ENCODE measurements at regions of chr10 and their contacts with region 1.

Region 1: DNA sequence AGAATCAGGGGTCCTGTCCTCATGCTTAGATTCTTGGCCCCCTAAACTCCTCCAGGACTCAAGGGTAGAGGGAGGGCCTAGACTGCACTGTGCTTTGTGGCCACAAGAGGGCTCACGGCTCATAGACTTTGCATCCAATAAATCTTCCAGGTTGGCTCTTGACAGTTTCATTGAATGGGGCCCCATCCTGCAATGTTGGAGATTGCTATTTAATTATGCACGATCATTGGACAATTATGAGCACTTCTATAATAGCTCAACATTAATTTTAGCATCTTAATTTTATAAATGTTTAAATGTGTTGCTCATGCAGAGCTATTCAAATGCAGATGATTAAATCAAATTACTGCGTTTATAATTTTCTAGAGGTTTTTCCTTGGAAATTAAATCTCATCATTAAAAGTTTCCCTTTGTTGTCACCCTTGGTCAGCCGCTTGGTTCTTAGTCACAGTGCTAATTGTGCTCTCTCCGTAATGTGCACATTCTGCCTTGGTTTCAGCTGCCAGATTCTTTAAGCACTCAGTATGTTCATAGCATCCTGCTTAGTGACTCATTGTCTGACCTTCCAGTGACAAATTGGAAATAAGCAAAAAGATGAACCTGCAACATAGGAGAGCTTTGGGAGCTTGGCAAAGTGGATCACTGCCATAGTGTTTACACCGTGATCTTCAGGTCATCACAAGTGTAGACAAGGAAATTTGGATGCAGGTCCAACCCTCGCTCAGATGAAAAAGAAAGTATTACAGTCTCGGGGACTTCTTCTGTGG is 33.4 kb upstream of the PLPP4 start:
- H3K4me3 ChIP-seq: no peak overlapping the region
- H3K27ac ChIP-seq: no peak overlapping the region
- H3K4me1 ChIP-seq: no peaks in the 10 kb centered on the region
- CTCF ChIP-seq: peak; percentile 32; the same call in 1 of the 2 replicates

Region 2: DNA sequence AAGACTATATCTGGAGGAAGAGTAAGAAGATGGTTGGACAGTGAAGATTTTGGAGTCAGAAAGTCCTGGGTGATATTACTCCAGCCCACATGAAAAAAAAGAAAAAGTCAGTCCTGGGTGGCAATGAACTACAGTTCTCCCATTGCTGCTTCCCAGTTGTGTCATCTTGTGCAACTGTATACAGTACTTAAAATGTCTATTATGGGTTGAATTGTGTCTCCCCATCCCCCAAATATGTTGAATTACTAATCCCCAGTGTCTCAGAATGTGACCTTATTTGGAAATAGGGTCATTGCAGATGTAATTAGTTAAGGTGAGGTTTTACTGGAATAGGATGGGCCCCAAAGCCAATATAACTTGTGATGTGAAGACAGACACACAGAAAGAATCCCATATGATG is 515.4 kb before region 1 on chr10:
- CTCF ChIA-PET with region 1: no interaction called
- POLR2A ChIA-PET with region 1: no interaction called
- H3K4me3 ChIP-seq: no peak overlapping the region
- H3K27ac ChIP-seq: no peak overlapping the region
- H3K4me1 ChIP-seq: no peaks in the 10 kb centered on the region
- CTCF ChIP-seq: no peak

Region 3: DNA sequence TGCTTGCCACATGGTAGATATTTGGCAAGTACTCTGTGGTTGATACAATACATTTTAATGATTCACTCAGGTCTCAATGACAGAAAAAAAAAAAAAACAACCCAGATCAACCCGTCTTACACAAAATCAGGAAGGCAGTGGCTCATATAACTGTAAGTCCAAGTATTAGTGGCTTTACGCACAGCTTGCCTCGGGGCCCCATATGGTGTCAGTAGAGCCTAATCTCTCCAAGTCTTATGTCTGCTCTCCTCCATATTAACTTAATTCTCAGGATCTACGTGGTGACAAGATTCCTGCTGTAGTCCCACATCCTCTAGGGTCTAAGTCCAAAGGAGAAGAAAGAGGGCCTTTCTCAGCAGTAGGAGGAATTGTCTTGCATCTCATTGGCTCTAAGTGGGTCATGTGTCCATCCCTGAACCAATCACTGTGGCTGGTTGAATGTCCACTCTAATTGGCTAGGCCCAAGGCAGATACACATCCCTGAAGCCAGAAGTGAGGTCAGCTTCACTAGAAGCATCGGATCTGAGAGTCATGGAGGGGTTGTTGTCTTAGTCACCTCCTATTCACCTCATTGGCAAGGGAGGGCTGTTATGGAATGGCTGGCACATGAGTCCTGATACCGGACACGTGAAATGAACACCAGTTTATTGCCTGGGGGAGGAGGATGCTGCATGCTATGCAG is 13.0 kb after region 1 on chr10:
- CTCF ChIA-PET with region 1: interaction called, 11 read pairs
- POLR2A ChIA-PET with region 1: no interaction called
- H3K4me3 ChIP-seq: no peak overlapping the region
- H3K27ac ChIP-seq: no peak overlapping the region
- H3K4me1 ChIP-seq: no peaks in the 10 kb centered on the region
- CTCF ChIP-seq: peak; percentile 24; the same call in 1 of the 2 replicates

Region 4: DNA sequence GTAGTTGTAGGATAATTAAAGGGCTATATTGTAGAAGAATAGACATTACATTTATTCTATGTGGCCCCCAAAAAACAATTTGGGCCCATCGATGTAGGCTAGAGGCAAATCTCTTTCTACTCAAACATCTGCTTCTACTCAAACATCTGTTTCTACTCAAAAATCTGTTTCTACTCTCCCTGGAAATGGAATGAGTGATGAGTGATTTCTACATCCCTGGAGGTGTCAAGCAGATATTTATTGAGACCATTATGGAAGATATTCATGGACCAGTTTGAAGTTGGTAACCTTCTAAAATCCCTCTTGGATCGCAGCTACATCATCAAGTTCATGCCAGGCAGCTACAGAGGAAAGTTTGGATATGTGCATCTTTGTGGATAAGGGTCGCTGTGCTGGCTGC is 28.4 kb after region 1 on chr10:
- CTCF ChIA-PET with region 1: interaction called, 11 read pairs
- POLR2A ChIA-PET with region 1: no interaction called
- H3K4me3 ChIP-seq: no peak overlapping the region
- H3K27ac ChIP-seq: no peak overlapping the region
- H3K4me1 ChIP-seq: no peaks in the 10 kb centered on the region; the same call in 1 of the 2 replicates
- CTCF ChIP-seq: no peak

Region 5: GRCh38 chr10:120600871-120601649 is 177.4 kb after region 1 on chr10:
- CTCF ChIA-PET with region 1: interaction called, 10 read pairs
- POLR2A ChIA-PET with region 1: no interaction called
- H3K4me3 ChIP-seq: no peak overlapping the region
- H3K27ac ChIP-seq: no peak overlapping the region
- H3K4me1 ChIP-seq: no peaks in the 10 kb centered on the region
- CTCF ChIP-seq: peak; percentile 48; the same call in 1 of the 2 replicates

Region 6: GRCh38 chr10:120735773-120736371 is 312.3 kb after region 1 on chr10:
- CTCF ChIA-PET with region 1: interaction called, 11 read pairs
- POLR2A ChIA-PET with region 1: no interaction called
- H3K4me3 ChIP-seq: no peak overlapping the region
- H3K27ac ChIP-seq: no peak overlapping the region
- H3K4me1 ChIP-seq: no peaks in the 10 kb centered on the region
- CTCF ChIP-seq: no peak

Measured in HEK293 (cell line).